RWPE1 (cell line): ENCODE measurements at regions of chr2 and their contacts with region 1.

Region 1: DNA sequence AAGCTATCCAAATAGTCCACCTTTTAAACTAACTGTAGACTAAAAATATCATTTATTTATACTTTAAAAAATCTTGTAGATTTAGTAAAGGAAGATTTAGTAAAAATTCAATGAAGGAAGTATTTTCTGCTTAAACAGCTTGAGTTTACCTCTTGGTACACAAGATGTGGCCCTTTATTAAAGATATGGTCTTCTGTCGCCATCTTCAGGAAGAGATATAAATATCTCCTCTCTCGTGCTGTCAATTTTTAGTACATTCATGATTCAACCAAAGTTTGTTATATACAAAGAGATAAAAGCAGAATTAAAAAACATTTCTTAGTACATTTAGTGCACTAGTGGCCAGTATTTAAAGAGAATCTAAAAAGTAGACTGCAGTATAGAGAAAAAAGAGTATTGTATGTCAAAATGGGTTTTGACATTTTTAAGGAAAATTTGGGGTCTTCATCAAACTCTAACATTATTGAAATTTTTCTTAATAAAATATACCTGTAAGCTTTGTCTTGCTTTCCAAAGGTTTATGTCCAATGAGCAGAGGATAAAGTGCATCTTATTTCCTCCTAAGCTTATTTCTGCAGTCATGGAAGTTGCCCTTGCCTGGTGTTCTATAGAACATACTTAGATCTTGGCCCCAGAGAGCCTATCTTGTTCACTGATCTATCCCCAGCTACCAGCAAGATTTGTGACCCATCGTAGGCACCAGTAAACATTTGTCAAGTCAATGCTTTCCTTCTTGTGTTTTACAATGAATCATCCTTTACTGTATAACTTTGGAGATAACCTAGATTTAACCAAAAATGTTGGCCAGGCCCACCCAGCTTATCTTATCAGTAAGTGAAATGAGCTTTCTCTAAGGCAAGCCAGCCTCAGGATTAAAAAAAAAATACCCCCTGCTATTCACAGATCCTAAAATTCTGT is 18.5 kb upstream of the EML6 start:
- DNase-seq: peak; percentile 24
- H3K27ac ChIP-seq: no peak overlapping the region
- CTCF ChIP-seq: peak; percentile 73

Region 2: GRCh38 chr2:54106631-54107454 is 598.1 kb before region 1 on chr2:
- CTCF ChIA-PET with region 1: interaction called, 18 read pairs
- POLR2A ChIA-PET with region 1: no interaction called
- DNase-seq: peak; percentile 52
- H3K27ac ChIP-seq: no peak overlapping the region
- CTCF ChIP-seq: peak; percentile 78

Region 3: DNA sequence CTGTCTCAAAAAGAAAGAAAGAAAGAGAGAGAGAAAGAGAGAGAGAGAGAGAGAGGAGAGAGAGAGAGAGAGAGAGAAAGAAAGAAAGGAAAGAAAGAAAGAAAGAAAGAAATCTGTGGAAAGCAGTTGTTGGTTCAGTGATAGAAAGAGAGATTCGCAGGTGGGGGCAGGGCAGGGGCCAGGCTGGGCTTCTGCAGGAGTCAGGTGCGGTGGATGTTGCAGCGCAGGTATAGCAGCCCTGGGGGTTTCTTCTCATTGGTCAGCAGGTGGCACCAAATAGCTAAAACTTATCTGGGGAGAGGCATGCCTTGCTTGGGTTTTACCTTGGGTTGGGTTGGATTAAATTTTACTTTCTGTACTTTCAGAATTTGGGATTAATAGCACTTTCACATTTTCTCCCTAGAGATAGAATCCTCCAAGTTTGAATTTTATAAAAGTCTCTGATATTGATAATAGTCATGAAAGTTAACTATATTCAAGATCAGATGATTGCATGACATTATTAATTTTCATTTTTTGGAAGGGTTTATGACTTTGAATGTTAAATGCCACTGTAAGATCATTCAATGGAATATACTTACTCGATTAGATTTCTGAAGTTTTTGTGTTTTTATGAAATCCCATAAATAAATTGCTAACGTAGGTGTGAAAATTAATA is 182.2 kb before region 1 on chr2:
- CTCF ChIA-PET with region 1: interaction called, 21 read pairs
- POLR2A ChIA-PET with region 1: no interaction called
- DNase-seq: peak; percentile 75
- H3K27ac ChIP-seq: no peak overlapping the region
- CTCF ChIP-seq: peak; percentile 74

Region 4: DNA sequence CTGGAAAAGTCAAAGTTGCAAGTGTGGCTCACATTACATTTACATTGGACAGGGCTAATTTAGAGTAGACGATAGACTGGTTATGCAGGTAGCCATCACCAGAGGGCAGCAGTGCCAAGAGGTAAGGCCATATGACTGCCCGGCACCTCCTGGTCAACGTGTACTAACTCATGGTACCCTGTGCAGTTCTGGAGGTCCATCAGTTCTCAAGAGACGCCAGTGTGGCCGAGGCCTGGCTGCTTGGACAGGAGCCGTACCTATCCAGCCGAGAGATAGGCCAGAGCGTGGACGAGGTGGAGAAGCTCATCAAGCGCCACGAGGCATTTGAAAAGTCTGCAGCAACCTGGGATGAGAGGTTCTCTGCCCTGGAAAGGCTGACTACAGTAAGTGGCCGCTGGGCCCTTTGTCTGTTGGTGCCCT is 47.3 kb before region 1 on chr2:
- CTCF ChIA-PET with region 1: interaction called, 10 read pairs
- POLR2A ChIA-PET with region 1: no interaction called
- DNase-seq: peak; percentile 44
- H3K27ac ChIP-seq: peak overlapping the region; percentile 47
- CTCF ChIP-seq: peak; percentile 55

Region 5: DNA sequence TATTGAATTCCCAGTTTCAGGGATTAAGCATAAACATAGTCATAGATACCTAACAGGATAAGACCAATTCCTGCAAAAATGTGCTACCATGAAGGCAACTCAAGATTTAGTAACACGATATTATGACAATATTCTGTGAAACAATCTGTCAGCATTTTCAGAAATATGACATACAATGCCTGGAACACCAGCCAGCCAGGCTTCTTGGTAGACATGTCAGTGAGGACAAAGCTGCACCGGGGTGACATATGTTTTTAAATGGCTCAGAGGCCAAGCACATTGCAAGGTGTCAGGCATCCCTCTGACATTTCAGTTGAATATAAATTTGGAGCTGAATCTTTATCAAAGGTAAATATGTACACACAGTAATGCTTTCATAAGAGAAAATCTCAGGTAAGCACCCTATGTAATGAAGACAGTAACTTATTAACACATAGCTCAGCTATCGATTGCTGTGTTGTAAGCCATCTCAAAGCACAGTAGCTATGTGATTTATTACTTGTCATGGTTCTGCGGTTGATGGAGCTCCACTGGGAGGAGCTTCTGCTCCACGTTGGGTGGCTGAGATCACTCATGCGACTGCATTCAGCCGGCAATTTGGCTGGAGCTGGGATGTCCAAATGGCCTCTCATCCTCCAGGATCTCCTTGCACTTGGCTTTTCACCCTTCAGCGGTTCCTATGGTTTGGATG is 13.4 kb before region 1 on chr2:
- CTCF ChIA-PET with region 1: interaction called, 11 read pairs
- POLR2A ChIA-PET with region 1: no interaction called
- DNase-seq: no peak
- H3K27ac ChIP-seq: no peak overlapping the region
- CTCF ChIP-seq: no peak